ENCODE measurements at regions of chr10 and their contacts with region 1.

Region 1: GRCh38 chr10:88932539-88933256 is 19.9 kb downstream of the ACTA2 start:
- DNase-seq: peak in 7 of 9 experiments; percentile 17 to 72 (median 34)
- ATAC-seq: peak; percentile 78
- H3K4me3 ChIP-seq: no peak overlapping the region
- H3K4me3 Mint-ChIP-seq: no peak overlapping the region
- H3K27ac ChIP-seq: no peak overlapping the region
- H3K27ac Mint-ChIP-seq: no peak overlapping the region
- H3K4me1 ChIP-seq: peaks cover 5% of the 10 kb centered on the region
- H3K4me1 Mint-ChIP-seq: peaks cover 15% of the 10 kb centered on the region
- H3K27me3 ChIP-seq: no peaks in the 10 kb centered on the region
- H3K27me3 Mint-ChIP-seq: no peaks in the 10 kb centered on the region
- CTCF ChIP-seq: peak; percentile 75

Region 2: GRCh38 chr10:88687853-88688467 is 244.7 kb before region 1 on chr10:
- CTCF ChIA-PET with region 1: interaction called, 21 read pairs
- POLR2A ChIA-PET with region 1: no interaction called
- intact Hi-C with region 1: loop called (anchors 1 to 5 kb)
- DNase-seq: peak in 2 of 9 experiments; percentile 24 to 43
- ATAC-seq: no peak
- H3K4me3 ChIP-seq: no peak overlapping the region
- H3K4me3 Mint-ChIP-seq: no peak overlapping the region
- H3K27ac ChIP-seq: no peak overlapping the region
- H3K27ac Mint-ChIP-seq: no peak overlapping the region
- H3K4me1 ChIP-seq: no peaks in the 10 kb centered on the region
- H3K4me1 Mint-ChIP-seq: no peaks in the 10 kb centered on the region
- H3K27me3 ChIP-seq: no peaks in the 10 kb centered on the region
- H3K27me3 Mint-ChIP-seq: peaks cover 3% of the 10 kb centered on the region
- CTCF ChIP-seq: peak; percentile 96

Region 3: GRCh38 chr10:88828310-88828709 is 104.4 kb before region 1 on chr10:
- CTCF ChIA-PET with region 1: interaction called, 353 read pairs
- POLR2A ChIA-PET with region 1: interaction called, 3 read pairs
- intact Hi-C with region 1: no loop called
- DNase-seq: no peak
- ATAC-seq: no peak
- H3K4me3 ChIP-seq: no peak overlapping the region
- H3K4me3 Mint-ChIP-seq: no peak overlapping the region
- H3K27ac ChIP-seq: no peak overlapping the region
- H3K27ac Mint-ChIP-seq: no peak overlapping the region
- H3K4me1 ChIP-seq: peaks cover 39% of the 10 kb centered on the region
- H3K4me1 Mint-ChIP-seq: peaks cover 70% of the 10 kb centered on the region
- H3K27me3 ChIP-seq: no peaks in the 10 kb centered on the region
- H3K27me3 Mint-ChIP-seq: no peaks in the 10 kb centered on the region
- CTCF ChIP-seq: no peak

Region 4: GRCh38 chr10:88880282-88881076 is 52.2 kb before region 1 on chr10:
- CTCF ChIA-PET with region 1: interaction called, 21 read pairs
- POLR2A ChIA-PET with region 1: interaction called, 3 read pairs
- intact Hi-C with region 1: loop called (anchors 5 kb)
- DNase-seq: peak; percentile 43 to 86 (median 70)
- ATAC-seq: peak; percentile 69
- H3K4me3 ChIP-seq: peak overlapping the region; percentile 81 to 89
- H3K4me3 Mint-ChIP-seq: peak overlapping the region; percentile 98
- H3K27ac ChIP-seq: peak overlapping the region; percentile 76 to 79
- H3K27ac Mint-ChIP-seq: peak overlapping the region; percentile 96
- H3K4me1 ChIP-seq: peaks cover 37% of the 10 kb centered on the region
- H3K4me1 Mint-ChIP-seq: peaks cover 61% of the 10 kb centered on the region
- H3K27me3 ChIP-seq: no peaks in the 10 kb centered on the region
- H3K27me3 Mint-ChIP-seq: no peaks in the 10 kb centered on the region
- CTCF ChIP-seq: peak; percentile 17

Region 5: DNA sequence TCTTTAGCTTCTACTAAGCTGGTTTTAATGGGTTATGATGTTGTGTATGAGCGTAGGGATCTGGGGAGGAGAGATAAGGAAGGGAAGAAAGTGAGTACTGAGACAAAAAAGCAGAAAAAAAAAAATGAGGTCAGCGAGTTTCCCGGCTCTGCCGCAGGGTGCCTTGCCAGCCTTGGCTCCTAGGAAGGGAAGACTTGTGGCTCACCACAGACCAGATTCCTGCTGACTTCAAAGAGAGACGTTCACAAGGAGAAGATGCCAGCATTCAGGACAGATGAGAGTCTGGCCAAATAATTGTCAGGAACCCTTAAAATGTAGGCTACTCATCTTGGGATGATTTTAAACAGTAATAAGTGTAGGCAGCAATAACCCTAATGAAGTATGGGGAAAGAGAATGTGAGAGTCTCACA is 46.5 kb after region 1 on chr10:
- CTCF ChIA-PET with region 1: interaction called, 14 read pairs
- POLR2A ChIA-PET with region 1: no interaction called
- intact Hi-C with region 1: no loop called
- DNase-seq: no peak
- ATAC-seq: no peak
- H3K4me3 ChIP-seq: no peak overlapping the region
- H3K4me3 Mint-ChIP-seq: no peak overlapping the region
- H3K27ac ChIP-seq: no peak overlapping the region
- H3K27ac Mint-ChIP-seq: no peak overlapping the region
- H3K4me1 ChIP-seq: peaks cover 7% of the 10 kb centered on the region
- H3K4me1 Mint-ChIP-seq: peaks cover 25% of the 10 kb centered on the region
- H3K27me3 ChIP-seq: no peaks in the 10 kb centered on the region
- H3K27me3 Mint-ChIP-seq: no peaks in the 10 kb centered on the region
- CTCF ChIP-seq: no peak

Region 6: DNA sequence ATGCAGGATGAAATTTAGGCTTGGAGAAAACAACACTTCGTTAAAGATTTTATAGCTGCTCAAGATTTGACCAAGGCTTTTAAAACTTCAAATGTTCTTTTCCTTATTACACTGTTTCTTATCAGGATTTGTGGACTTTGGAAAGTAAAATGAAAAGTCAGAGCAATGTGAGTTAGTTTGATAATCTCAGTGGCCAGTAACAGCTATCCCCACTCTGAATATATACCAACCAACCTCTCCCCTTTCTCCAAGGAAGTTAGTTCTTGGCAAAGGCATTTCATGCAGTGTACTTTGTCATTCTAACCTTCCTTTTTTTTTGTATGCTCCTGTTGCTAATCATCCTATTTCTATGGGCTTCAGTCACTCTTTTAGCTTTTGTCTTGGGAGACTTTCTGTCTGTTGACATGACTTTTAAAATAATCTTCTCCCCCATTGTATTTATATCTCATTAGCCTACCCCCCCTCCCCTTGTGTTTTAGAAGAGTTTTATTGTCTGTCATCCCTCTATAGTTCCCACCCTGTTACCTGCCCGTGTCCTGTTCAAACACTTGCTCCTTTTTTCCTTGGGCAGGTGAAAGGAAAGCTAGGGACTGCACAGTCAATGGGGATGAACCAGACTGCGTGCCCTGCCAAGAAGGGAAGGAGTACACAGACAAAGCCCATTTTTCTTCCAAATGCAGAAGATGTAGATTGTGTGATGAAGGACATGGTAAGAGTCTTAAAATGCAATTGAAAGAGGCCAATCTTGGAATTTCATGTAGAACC is 74.6 kb after region 1 on chr10:
- CTCF ChIA-PET with region 1: interaction called, 11 read pairs
- POLR2A ChIA-PET with region 1: no interaction called
- intact Hi-C with region 1: loop called (anchors 2 to 5 kb)
- DNase-seq: no peak
- ATAC-seq: no peak
- H3K4me3 ChIP-seq: no peak overlapping the region
- H3K4me3 Mint-ChIP-seq: no peak overlapping the region
- H3K27ac ChIP-seq: no peak overlapping the region
- H3K27ac Mint-ChIP-seq: no peak overlapping the region
- H3K4me1 ChIP-seq: peaks cover 6% of the 10 kb centered on the region
- H3K4me1 Mint-ChIP-seq: peaks cover 11% of the 10 kb centered on the region
- H3K27me3 ChIP-seq: no peaks in the 10 kb centered on the region
- H3K27me3 Mint-ChIP-seq: no peaks in the 10 kb centered on the region
- CTCF ChIP-seq: no peak

Region 7: DNA sequence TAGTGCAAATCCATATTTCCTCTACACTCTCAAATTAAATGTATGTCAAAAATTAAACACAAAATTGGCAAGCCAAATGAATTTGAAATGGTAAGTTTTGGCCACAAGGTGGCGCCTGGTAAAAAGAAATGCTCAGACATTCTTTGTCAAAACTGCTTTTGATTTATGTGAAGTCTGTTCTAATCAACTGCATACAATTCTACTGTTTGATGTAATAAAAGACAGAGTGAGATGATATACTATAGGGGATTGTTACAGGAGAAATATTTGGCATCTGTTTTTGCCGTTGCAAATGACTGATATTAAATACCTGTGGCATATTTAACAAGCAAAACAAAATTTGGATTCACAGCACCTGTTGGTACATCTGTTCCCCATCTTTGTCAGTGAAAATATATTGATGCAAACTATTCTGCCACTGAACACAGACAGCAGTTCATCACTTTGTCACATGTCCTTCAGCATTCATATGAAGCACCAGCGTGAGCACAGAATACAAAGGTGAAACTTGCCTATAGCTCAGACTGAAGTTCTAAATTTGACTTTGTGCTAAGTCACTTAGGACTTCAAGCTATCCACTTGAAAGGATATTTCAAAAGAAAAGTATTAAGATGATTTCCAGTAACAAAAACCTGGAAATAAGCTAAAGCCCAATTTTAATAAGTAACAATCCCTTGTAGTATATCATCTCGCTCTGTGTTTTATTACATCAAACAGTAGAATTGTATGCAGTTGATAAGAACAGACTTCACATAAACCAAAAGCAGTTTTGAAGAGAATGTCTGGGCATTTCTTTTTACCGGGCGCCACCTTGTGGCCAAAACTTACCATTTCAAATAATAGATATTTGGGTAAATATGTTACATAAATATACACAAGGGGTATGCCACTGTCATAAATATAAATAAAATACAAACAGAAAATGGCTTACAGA is 284.6 kb after region 1 on chr10:
- CTCF ChIA-PET with region 1: interaction called, 135 read pairs
- POLR2A ChIA-PET with region 1: interaction called, 3 read pairs
- intact Hi-C with region 1: loop called (anchors 1 kb)
- DNase-seq: peak; percentile 30 to 75 (median 68)
- ATAC-seq: peak; percentile 63
- H3K4me3 ChIP-seq: no peak overlapping the region
- H3K4me3 Mint-ChIP-seq: no peak overlapping the region
- H3K27ac ChIP-seq: no peak overlapping the region
- H3K27ac Mint-ChIP-seq: peak overlapping the region; percentile 41
- H3K4me1 ChIP-seq: peaks cover 6% of the 10 kb centered on the region
- H3K4me1 Mint-ChIP-seq: peaks cover 8% of the 10 kb centered on the region
- H3K27me3 ChIP-seq: no peaks in the 10 kb centered on the region
- H3K27me3 Mint-ChIP-seq: no peaks in the 10 kb centered on the region
- CTCF ChIP-seq: peak; percentile 81

Measured in CD8-positive, alpha-beta T cell (primary cell).